ENCODE measurements at regions of chr18 and their contacts with region 1.

Region 1: GRCh38 chr18:22399949-22400348 is 17.8 kb downstream of the CTAGE1 start:
- DNase-seq: peak in 4 of 5 donors; percentile 40 to 53 (median 46)
- ATAC-seq: peak; percentile 77 to 89 (median 86)
- H3K4me3 ChIP-seq: no peak overlapping the region
- H3K27ac ChIP-seq: peak overlapping the region in 5 of 12 donors; percentile 3 to 37 (median 10)
- H3K4me1 ChIP-seq: peaks cover 0 to 26% (median 18%) of the 10 kb centered on the region in 12 donors
- H3K27me3 ChIP-seq: no peaks in the 10 kb centered on the region
- CTCF ChIP-seq: peak in 5 of 12 donors; percentile 11 to 32 (median 25)
- POLR2A ChIP-seq: no peak

Region 2: DNA sequence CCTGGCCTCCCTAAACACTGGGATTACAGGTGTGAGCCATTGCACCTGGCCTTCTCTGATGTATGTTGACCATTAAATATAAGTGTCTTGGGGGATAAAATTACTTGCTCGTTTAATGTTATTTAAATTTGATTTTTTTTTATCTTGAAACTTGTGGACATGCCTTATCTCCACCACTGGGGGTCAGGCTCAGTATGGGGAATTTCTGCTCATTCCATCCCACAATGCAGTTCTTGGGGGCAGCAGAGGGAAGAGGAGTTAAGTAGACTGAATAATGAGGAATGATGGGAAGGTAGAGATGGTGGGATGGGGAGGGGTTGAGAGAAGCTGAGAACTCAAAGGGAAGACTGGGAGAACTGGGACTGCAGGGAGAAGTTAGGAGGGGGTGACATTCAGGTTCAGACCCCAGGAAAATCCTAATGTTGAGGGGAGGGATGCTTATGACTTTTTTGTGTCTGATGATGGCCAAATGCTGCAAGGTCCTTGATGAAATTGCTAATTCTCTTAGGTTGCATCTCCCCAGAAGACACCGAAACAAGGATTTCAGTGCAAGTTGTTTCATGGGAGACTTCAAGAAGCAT is 485.1 kb before region 1 on chr18:
- intact Hi-C with region 1: no loop called
- DNase-seq: peak in 2 of 5 donors; percentile 18 to 22
- ATAC-seq: peak in 3 of 4 donors; percentile 70 to 83 (median 76)
- H3K4me3 ChIP-seq: no peak overlapping the region
- H3K27ac ChIP-seq: no peak overlapping the region
- H3K4me1 ChIP-seq: no peaks in the 10 kb centered on the region
- H3K27me3 ChIP-seq: no peaks in the 10 kb centered on the region
- CTCF ChIP-seq: peak in 11 of 12 donors; percentile 25 to 63 (median 44)
- POLR2A ChIP-seq: no peak

Region 3: DNA sequence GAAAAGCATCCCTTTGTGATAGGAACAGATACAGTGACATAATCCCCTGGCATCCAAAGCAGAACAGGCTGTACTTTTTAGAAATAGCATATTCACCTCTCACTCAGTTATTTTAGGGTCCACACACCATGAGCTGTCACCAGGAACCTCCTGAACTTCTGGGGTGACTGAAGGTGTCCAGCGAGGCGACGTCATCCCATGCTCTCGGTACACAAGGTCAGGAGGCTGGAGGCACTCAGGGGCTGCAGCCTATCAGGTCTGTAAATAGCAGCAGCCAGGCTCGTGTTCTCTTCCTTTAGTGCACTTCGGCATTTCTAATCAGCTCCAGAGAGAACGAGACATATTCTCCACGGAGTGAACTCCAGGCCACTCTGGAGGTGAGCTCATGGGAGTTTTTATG is 132.3 kb before region 1 on chr18:
- intact Hi-C with region 1: no loop called
- DNase-seq: peak; percentile 78 to 95 (median 86)
- ATAC-seq: peak; percentile 92 to 96 (median 92)
- H3K4me3 ChIP-seq: peak overlapping the region in 9 of 12 donors; percentile 34 to 61 (median 50)
- H3K27ac ChIP-seq: peak overlapping the region; percentile 77 to 99 (median 92)
- H3K4me1 ChIP-seq: peaks cover 0 to 33% (median 7%) of the 10 kb centered on the region in 12 donors
- H3K27me3 ChIP-seq: no peaks in the 10 kb centered on the region
- CTCF ChIP-seq: no peak
- POLR2A ChIP-seq: peak in 1 of 2 donors; percentile 31

Region 4: GRCh38 chr18:22355598-22355997 is 44.4 kb before region 1 on chr18:
- intact Hi-C with region 1: loop called in 2 of 10 experiments (anchors 5 kb)
- DNase-seq: peak in 1 of 5 donors; percentile 45
- ATAC-seq: peak; percentile 27 to 89 (median 65)
- H3K4me3 ChIP-seq: no peak overlapping the region
- H3K27ac ChIP-seq: peak overlapping the region in 11 of 12 donors; percentile 2 to 76 (median 58)
- H3K4me1 ChIP-seq: peaks cover 0 to 21% (median 8%) of the 10 kb centered on the region in 12 donors
- H3K27me3 ChIP-seq: no peaks in the 10 kb centered on the region
- CTCF ChIP-seq: no peak
- POLR2A ChIP-seq: no peak

Region 5: DNA sequence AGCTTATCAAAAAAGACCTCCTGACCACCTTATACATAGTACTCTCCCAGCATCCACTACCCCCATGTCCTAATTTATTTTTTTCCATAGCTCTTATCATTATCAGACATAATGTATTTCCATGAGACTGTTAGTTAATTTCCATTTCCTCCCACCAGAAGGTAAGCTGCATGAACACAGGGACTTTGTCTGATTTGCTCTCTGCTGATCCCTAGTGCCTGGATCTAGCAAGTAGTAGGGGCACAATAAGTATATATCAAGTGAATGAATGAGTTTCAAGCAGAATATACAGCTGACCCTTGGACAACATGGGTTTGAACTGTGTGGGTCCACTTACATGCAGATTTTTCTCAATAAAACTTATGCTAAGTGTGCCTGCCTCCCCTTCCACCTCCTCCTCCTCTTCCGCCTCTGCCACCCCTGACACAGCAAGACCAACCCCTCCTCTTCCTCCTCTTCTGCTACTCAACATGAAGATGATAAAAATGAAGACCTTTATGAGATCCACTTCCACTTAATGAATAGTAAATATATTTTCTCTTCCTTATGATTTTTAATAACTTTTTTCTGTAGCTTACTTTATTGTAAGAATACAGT is 36.0 kb before region 1 on chr18:
- intact Hi-C with region 1: loop called in 2 of 10 experiments (anchors 5 kb)
- DNase-seq: no peak
- ATAC-seq: peak; percentile 47 to 80 (median 73)
- H3K4me3 ChIP-seq: no peak overlapping the region
- H3K27ac ChIP-seq: no peak overlapping the region
- H3K4me1 ChIP-seq: peaks cover 0 to 9% (median 0%) of the 10 kb centered on the region in 12 donors
- H3K27me3 ChIP-seq: no peaks in the 10 kb centered on the region
- CTCF ChIP-seq: peak in 11 of 12 donors; percentile 12 to 59 (median 47)
- POLR2A ChIP-seq: no peak

Region 6: DNA sequence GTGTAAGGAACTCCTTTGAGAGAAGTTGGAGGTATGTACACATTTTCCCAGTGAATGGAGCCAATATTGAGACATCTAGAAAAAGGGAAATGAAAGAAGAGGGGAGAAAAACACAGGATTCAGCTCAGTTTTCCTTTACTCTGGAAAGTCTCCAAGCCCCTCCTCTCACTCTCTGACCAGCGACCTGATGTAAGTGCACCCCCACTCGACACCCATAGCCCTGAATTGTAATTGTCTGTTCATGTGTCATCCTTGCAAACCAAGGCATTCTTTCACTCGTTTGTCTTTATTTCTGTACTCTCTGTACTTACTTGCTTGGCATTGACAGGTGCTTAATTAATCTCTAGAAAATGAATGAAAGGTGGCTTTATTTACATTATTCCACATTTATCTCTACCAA is 73.4 kb after region 1 on chr18:
- intact Hi-C with region 1: no loop called
- DNase-seq: no peak
- ATAC-seq: no peak
- H3K4me3 ChIP-seq: no peak overlapping the region
- H3K27ac ChIP-seq: peak overlapping the region in 2 of 12 donors; percentile 80 to 91
- H3K4me1 ChIP-seq: peaks cover 0 to 40% (median 33%) of the 10 kb centered on the region in 12 donors
- H3K27me3 ChIP-seq: no peaks in the 10 kb centered on the region
- CTCF ChIP-seq: no peak
- POLR2A ChIP-seq: no peak

Measured in heart left ventricle (tissue), 16 donors.